ENCODE measurements at regions of chr2 and their contacts with region 1.

Region 1: DNA sequence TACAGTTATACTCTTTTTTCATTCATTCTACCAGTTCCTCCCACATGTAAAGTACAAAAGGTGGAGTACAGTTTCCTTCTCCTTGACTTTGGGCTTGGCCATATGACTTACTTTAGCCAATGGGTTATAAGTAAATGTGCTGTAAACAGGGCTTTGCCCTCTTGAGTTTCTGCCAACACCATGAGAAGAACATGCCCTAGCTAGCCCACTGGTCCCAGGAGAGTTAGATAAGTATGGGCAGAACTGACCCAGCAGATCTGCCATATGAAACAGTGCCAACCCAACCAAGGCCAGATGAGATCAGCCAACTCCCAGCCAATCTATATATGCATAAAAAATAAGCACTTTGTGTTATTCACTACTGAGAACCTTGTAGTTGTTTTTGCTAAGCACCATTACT is 25.5 kb downstream of the ZC3H8 start:
- DNase-seq: no peak
- ATAC-seq: no peak
- H3K4me3 ChIP-seq: no peak overlapping the region
- H3K27ac ChIP-seq: no peak overlapping the region
- H3K4me1 ChIP-seq: no peaks in the 10 kb centered on the region
- H3K27me3 ChIP-seq: no peaks in the 10 kb centered on the region
- CTCF ChIP-seq: no peak
- EP300 ChIP-seq: no peak
- POLR2A ChIP-seq: no peak
- RAD21 ChIP-seq: no peak

Region 2: GRCh38 chr2:112187805-112188596 is 41.3 kb before region 1 on chr2:
- CTCF ChIA-PET with region 1: no interaction called
- POLR2A ChIA-PET with region 1: no interaction called
- in situ Hi-C with region 1: no loop called
- intact Hi-C with region 1: no loop called
- DNase-seq: peak; percentile 51 to 84 (median 72)
- ATAC-seq: peak; percentile 94
- H3K4me3 ChIP-seq: no peak overlapping the region
- H3K27ac ChIP-seq: peak overlapping the region; percentile 78
- H3K4me1 ChIP-seq: peaks cover 14 to 18% of the 10 kb centered on the region in 2 experiments
- H3K27me3 ChIP-seq: no peaks in the 10 kb centered on the region
- CTCF ChIP-seq: no peak
- EP300 ChIP-seq: peak; percentile 29; the same call in 1 of the 2 replicates
- POLR2A ChIP-seq: peak; percentile 46; the same call in 1 of the 2 replicates
- RAD21 ChIP-seq: peak in 1 of 2 experiments; percentile 15; a peak in 2 of 4 replicates

Region 3: GRCh38 chr2:112242384-112242783 is 13.0 kb after region 1 on chr2:
- CTCF ChIA-PET with region 1: no interaction called
- POLR2A ChIA-PET with region 1: interaction called, 15 read pairs
- in situ Hi-C with region 1: no loop called
- intact Hi-C with region 1: no loop called
- DNase-seq: no peak
- ATAC-seq: no peak
- H3K4me3 ChIP-seq: no peak overlapping the region
- H3K27ac ChIP-seq: no peak overlapping the region
- H3K4me1 ChIP-seq: peaks cover 3 to 13% of the 10 kb centered on the region in 2 experiments; a peak in 3 of 5 replicates
- H3K27me3 ChIP-seq: no peaks in the 10 kb centered on the region
- CTCF ChIP-seq: no peak
- EP300 ChIP-seq: no peak
- POLR2A ChIP-seq: no peak
- RAD21 ChIP-seq: no peak